ENCODE measurements at regions of chr3 and their contacts with region 1.

Region 1: GRCh38 chr3:51538459-51539290 is at the start of gene RAD54L2:
- DNase-seq: peak; percentile 23
- ATAC-seq: peak; percentile 90
- H3K4me3 ChIP-seq: peak within 1 kb of the TSS; percentile 97
- H3K27ac ChIP-seq: peak within 1 kb of the TSS; percentile 62
- H3K4me1 ChIP-seq: no peaks in the 10 kb centered on the region; the same call in 1 of the 2 replicates
- H3K27me3 ChIP-seq: no peaks in the 10 kb centered on the region
- CTCF ChIP-seq: peak; percentile 20 to 43 (median 33); a peak in 4 of 6 replicates
- EP300 ChIP-seq: no peak
- POLR2A ChIP-seq: peak; percentile 87
- RAD21 ChIP-seq: no peak
- polyA plus RNA-seq, gene RAD54L2: 2.2 to 4.2 TPM

Region 2: GRCh38 chr3:51519848-51520247 is 18.8 kb before region 1 on chr3:
- CTCF ChIA-PET with region 1: interaction called, 9 read pairs
- POLR2A ChIA-PET with region 1: interaction called, 38 read pairs
- RAD21 ChIA-PET with region 1: interaction called, 16 read pairs
- SMC1A ChIA-PET with region 1: interaction called, 19 read pairs
- in situ Hi-C with region 1: no loop called
- intact Hi-C with region 1: no loop called
- DNase-seq: no peak
- ATAC-seq: no peak
- H3K4me3 ChIP-seq: no peak overlapping the region
- H3K27ac ChIP-seq: no peak overlapping the region
- H3K4me1 ChIP-seq: no peaks in the 10 kb centered on the region; the same call in 1 of the 2 replicates
- H3K27me3 ChIP-seq: no peaks in the 10 kb centered on the region
- CTCF ChIP-seq: no peak
- EP300 ChIP-seq: no peak
- POLR2A ChIP-seq: no peak
- RAD21 ChIP-seq: no peak

Region 3: DNA sequence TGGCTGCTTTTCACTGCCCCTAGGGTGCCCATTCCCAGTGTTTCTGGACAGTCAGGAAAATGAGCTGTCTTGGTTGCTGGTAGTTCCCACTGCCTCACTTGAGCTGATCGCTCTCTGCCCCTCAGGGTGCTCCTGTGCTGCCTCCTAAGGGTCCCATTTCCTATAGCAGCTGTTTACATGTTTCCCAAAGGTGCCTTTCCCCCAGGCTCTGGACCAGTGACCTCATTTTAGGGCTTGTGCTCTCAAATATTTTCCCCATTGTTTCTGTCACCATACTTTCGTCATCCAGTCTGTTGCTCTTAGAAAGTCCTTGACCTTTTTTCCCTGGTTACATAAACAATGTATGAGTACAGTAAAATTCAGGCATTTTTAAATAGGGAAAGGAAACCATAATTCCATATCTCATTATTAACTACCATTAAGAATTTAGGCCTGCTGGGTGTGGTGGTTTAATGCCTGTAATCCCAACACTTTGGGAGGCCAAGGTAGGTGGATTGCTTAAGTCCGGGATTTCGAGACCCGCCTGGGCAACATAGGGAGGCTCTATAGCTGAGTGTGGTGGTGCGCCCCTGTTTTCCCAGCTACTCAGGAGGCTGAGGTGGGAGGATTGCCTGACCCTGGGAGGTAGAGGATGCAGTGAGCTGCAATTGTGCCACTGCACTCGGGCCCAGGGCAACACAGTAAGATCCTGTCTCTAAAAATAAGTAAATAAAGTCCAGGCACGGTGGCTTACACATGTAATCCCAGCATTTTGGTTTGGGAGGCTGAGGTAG is 11.6 kb after region 1 on chr3:
- CTCF ChIA-PET with region 1: interaction called, 5 read pairs
- POLR2A ChIA-PET with region 1: interaction called, 3 read pairs
- RAD21 ChIA-PET with region 1: no interaction called
- SMC1A ChIA-PET with region 1: interaction called, 10 read pairs
- in situ Hi-C with region 1: no loop called
- intact Hi-C with region 1: no loop called
- DNase-seq: no peak
- ATAC-seq: no peak
- H3K4me3 ChIP-seq: no peak overlapping the region
- H3K27ac ChIP-seq: no peak overlapping the region
- H3K4me1 ChIP-seq: no peaks in the 10 kb centered on the region
- H3K27me3 ChIP-seq: no peaks in the 10 kb centered on the region
- CTCF ChIP-seq: no peak
- EP300 ChIP-seq: no peak
- POLR2A ChIP-seq: no peak
- RAD21 ChIP-seq: no peak